Activated CD8-positive, alpha-beta T cell treated with anti-CD3 and anti-CD28 coated beads, Interleukin-2, amount 10 ng/mL, durations not matched to agents 7 days and 5 days (primary cell): ENCODE measurements at regions of chr2 and their contacts with region 1.

Region 1: GRCh38 chr2:84631047-84631446 is 114.7 kb downstream of the DNAH6 start:
- DNase-seq: no peak
- ATAC-seq: peak; percentile 71
- H3K4me3 Mint-ChIP-seq: no peak overlapping the region
- H3K27ac Mint-ChIP-seq: no peak overlapping the region
- H3K4me1 Mint-ChIP-seq: peaks cover 36% of the 10 kb centered on the region
- H3K27me3 Mint-ChIP-seq: no peaks in the 10 kb centered on the region

Region 2: DNA sequence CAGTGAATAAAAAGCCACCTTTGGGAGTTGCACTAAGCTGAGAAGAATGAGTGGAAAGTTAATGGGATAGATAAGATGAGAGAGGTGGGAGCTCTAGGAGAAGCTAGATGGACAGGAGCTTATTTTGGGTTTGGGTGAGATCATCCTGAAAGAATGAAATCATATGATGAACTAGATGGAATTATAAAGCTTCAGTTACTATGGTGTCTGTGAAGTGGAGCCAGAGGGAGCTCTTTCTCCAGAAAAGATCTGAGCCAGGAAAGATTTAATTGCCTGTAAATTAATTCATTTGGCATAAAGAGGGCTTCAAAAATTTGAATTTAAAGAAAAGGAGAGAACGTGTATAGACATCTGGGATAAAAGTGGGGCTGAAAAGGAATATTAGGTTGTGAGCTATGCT is 104.5 kb before region 1 on chr2:
- CTCF ChIA-PET with region 1: interaction called, 11 read pairs
- POLR2A ChIA-PET with region 1: no interaction called
- DNase-seq: no peak
- ATAC-seq: no peak
- H3K4me3 Mint-ChIP-seq: no peak overlapping the region
- H3K27ac Mint-ChIP-seq: no peak overlapping the region
- H3K4me1 Mint-ChIP-seq: no peaks in the 10 kb centered on the region
- H3K27me3 Mint-ChIP-seq: no peaks in the 10 kb centered on the region

Region 3: GRCh38 chr2:84537251-84537650 is 93.8 kb before region 1 on chr2:
- CTCF ChIA-PET with region 1: no interaction called
- POLR2A ChIA-PET with region 1: no interaction called
- DNase-seq: no peak
- ATAC-seq: no peak
- H3K4me3 Mint-ChIP-seq: no peak overlapping the region
- H3K27ac Mint-ChIP-seq: no peak overlapping the region
- H3K4me1 Mint-ChIP-seq: peaks cover 18% of the 10 kb centered on the region
- H3K27me3 Mint-ChIP-seq: peaks cover 3% of the 10 kb centered on the region

Region 4: DNA sequence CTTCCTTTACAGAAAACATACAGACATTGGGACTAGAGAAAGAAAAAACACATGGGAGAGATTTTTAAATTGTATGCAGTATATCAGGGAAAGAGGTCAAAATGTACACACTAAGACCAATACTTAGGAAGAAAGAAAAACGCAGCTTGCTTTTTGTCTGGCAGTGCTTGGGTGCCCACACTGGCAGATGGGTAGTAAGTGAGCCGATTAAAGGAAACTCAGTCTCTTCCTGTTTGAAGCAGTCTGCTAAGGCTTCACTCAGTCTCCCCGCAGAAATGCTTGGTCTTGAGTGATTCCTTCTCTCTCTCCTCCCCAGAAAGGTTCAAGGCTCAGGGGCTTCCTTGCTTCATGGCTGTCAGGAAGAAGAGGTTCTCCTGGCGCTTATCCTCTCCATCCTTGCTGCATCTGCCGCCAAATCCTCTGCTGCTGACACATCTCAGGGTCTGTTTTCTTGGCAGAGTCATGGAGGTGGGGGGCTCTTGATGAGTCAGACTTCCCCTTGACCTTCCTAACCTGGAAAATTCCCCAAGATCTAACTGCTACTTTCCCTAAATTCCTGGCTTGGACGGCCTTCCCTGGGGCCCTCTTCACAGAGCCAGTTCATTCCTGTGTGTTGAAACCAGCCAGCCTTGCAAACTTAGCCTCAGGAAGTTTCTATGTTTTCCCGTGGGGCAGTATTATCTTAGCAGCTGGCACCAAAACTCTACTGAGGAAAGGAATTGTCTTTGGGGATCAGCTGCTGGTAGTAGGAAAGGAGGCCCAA is 263.9 kb after region 1 on chr2:
- CTCF ChIA-PET with region 1: no interaction called
- POLR2A ChIA-PET with region 1: no interaction called
- DNase-seq: peak; percentile 46
- ATAC-seq: peak; percentile 65
- H3K4me3 Mint-ChIP-seq: peak overlapping the region; percentile 43
- H3K27ac Mint-ChIP-seq: peak overlapping the region; percentile 69
- H3K4me1 Mint-ChIP-seq: peaks cover 71% of the 10 kb centered on the region
- H3K27me3 Mint-ChIP-seq: no peaks in the 10 kb centered on the region